Ascending aorta (tissue), 2 donors: ENCODE measurements at regions of chr10 and their contacts with region 1.

Region 1: DNA sequence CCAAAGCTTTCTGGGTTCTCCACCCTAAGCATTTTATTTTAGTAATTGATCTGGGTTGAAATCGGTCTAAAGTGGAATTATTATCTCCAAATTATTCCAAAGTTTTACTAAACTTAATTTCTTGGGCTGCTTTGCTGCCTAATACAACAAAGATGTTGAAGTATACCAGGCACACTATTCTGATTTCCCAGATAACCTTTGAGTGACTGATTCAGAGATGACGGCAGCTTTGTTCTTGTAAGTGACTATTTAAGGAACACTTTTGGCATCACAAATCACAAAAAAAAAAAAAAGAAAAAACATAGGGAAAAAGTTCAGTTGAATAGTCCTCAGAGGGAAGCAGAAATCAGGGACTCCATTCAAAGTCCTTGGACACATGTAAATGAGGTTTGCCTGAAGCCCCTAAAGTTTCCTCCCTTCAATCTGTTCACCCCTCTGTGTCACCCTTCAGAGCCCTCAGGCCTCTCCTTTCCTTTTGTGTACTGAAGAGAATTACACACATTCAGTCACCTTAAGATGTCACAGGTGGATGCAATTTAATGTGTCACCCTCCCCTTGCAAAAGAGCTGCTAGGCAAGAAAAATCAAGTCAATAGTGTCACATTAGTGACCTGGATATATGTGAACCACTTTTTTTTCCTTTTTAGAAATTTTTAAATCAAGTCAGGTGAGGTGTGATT is 81.5 kb downstream of the RTKN2 start:
- DNase-seq: no peak
- H3K4me3 ChIP-seq: peak overlapping the region in 1 of 2 donors; percentile 5
- H3K27ac ChIP-seq: peak overlapping the region; percentile 17 to 76
- H3K4me1 ChIP-seq: peaks cover 0 to 7% of the 10 kb centered on the region in 2 donors
- H3K27me3 ChIP-seq: no peaks in the 10 kb centered on the region
- CTCF ChIP-seq: no peak

Region 2: GRCh38 chr10:62095181-62096071 is 91.7 kb before region 1 on chr10:
- intact Hi-C with region 1: loop called (anchors 5 kb)
- DNase-seq: no peak
- H3K4me3 ChIP-seq: no peak overlapping the region
- H3K27ac ChIP-seq: peak overlapping the region in 1 of 2 donors; percentile 27
- H3K4me1 ChIP-seq: peaks cover 4 to 19% of the 10 kb centered on the region in 2 donors
- H3K27me3 ChIP-seq: no peaks in the 10 kb centered on the region
- CTCF ChIP-seq: no peak